Mucosa of descending colon (tissue), 3 donors: ENCODE measurements at regions of chr14 and their contacts with region 1.

Region 1: GRCh38 chr14:88492272-88493089 is 62.3 kb downstream of the PTPN21 start:
- DNase-seq: peak in 2 of 3 donors; percentile 60 to 96
- ATAC-seq: peak; percentile 95
- H3K4me3 ChIP-seq: no peak overlapping the region
- H3K4me1 ChIP-seq: peaks cover 9% of the 10 kb centered on the region
- CTCF ChIP-seq: peak; percentile 82

Region 2: DNA sequence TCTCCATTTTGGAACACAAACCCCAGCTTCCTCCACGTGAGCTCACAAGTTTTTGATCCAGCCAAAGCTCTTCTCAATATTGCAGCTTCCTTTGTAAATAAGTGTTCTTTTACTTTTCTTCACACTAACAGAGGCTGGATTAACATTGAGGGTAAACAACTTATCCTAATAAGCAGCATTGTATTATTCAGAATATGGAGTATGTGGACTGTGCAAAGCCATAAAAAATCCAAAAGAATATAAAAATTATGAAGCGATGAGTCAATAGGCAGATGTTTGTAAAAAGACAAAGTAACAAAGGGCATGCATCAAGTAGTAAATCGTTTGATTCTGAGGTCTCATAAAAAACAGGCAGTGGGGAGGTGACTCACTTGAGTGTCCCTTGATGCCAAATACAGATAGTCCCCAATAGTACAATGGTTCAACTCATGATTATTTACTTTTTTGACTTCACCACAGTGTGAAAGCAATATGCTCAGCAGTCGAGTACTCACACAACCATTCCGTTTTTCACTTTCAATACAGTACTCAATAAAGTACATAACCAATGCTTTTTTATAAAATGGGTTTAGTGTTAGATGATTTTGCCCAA is 146.3 kb before region 1 on chr14:
- intact Hi-C with region 1: no loop called
- DNase-seq: no peak
- ATAC-seq: peak; percentile 72
- H3K4me3 ChIP-seq: no peak overlapping the region
- H3K4me1 ChIP-seq: no peaks in the 10 kb centered on the region
- CTCF ChIP-seq: no peak

Region 3: GRCh38 chr14:88473816-88474215 is 18.7 kb before region 1 on chr14:
- intact Hi-C with region 1: no loop called
- DNase-seq: no peak
- ATAC-seq: peak; percentile 67
- H3K4me3 ChIP-seq: no peak overlapping the region
- H3K4me1 ChIP-seq: peaks cover 4% of the 10 kb centered on the region
- CTCF ChIP-seq: no peak

Region 4: GRCh38 chr14:88546621-88547387 is 54.3 kb after region 1 on chr14:
- intact Hi-C with region 1: no loop called
- DNase-seq: no peak
- ATAC-seq: peak; percentile 61
- H3K4me3 ChIP-seq: no peak overlapping the region
- H3K4me1 ChIP-seq: peaks cover 51% of the 10 kb centered on the region
- CTCF ChIP-seq: no peak

Region 5: GRCh38 chr14:88562831-88563686 is 70.6 kb after region 1 on chr14 and contains the start of gene ZC3H14:
- intact Hi-C with region 1: loop called in 1 of 2 experiments (anchors 5 kb)
- DNase-seq: peak; percentile 83 to 92 (median 90)
- ATAC-seq: peak; percentile 98
- H3K4me3 ChIP-seq: peak within 1 kb of the TSS; percentile 75
- H3K4me1 ChIP-seq: peaks cover 19% of the 10 kb centered on the region
- CTCF ChIP-seq: no peak
- total RNA-seq, gene ZC3H14: 55.9 to 72.9 (median 70.7) TPM

Region 6: DNA sequence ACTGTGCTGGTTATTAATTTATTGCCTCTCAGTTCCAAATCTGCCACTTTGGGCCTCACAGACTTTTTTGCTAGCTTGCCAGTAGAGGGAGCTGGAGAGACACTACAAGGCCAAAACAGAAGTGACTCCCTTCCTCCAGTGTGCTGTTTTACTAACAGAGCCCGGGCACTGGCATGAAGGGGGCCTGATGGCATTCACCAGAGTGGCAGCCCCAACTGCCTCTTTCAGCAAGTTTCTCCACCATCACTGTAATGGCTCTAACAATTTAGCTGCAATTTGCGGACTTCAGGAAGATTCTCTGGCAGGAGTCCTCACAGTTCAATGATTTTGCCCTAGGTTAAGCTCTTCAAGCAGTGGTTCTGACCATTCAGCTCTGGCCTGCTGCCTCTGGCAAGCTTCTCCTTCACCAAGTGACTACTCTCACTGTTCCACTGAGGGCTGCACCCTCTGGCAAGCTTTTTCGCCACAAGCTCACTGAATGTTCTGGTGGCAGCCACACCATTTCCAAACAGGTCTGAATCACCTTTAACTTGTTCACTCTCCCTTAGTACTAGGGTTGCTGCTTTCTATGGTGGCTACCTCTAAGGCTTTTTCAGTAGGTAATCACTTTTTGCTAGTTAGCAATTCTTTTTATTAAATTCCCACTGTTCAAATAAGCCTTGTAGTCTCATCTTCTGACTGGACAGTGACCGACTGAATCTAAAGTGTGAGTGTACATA is 175.2 kb after region 1 on chr14:
- intact Hi-C with region 1: no loop called
- DNase-seq: peak in 2 of 3 donors; percentile 40 to 59
- ATAC-seq: peak; percentile 88
- H3K4me3 ChIP-seq: no peak overlapping the region
- H3K4me1 ChIP-seq: no peaks in the 10 kb centered on the region
- CTCF ChIP-seq: peak; percentile 63